GM18951 (cell line): ENCODE measurements at regions of chr3 and their contacts with region 1.

Region 1: DNA sequence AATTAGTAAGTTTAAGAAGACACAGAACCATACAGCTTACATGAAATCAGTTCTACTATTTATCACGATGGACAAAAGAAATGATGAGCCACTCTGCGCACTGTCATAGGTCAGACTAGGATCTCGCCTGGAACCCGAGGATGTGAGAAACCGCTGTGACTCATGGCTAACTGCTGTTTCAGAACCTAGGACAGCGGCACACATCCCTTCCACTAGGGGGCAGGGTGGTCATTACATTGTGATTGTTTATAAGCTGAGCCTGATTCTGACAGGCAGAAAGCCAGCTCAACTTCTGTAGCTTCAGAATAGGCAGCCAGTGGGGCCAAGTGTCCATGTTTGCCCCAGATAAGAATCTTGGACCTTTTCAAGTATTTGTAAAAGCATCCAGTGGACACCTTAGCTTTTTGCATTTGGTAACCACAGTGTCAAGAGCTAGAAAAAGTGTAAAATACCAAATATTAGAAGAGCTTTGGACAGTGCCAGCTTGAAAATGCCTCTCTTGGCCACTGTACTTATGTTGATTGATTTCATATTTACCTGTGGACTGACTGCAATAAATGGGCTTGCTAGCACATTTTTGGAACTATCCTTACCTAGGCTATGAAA is 115.8 kb downstream of the KBTBD8 start:
- POLR2A ChIP-seq: no peak

Region 2: GRCh38 chr3:67176396-67176795 is 62.5 kb after region 1 on chr3:
- in situ Hi-C with region 1: no loop called
- POLR2A ChIP-seq: no peak

Region 3: DNA sequence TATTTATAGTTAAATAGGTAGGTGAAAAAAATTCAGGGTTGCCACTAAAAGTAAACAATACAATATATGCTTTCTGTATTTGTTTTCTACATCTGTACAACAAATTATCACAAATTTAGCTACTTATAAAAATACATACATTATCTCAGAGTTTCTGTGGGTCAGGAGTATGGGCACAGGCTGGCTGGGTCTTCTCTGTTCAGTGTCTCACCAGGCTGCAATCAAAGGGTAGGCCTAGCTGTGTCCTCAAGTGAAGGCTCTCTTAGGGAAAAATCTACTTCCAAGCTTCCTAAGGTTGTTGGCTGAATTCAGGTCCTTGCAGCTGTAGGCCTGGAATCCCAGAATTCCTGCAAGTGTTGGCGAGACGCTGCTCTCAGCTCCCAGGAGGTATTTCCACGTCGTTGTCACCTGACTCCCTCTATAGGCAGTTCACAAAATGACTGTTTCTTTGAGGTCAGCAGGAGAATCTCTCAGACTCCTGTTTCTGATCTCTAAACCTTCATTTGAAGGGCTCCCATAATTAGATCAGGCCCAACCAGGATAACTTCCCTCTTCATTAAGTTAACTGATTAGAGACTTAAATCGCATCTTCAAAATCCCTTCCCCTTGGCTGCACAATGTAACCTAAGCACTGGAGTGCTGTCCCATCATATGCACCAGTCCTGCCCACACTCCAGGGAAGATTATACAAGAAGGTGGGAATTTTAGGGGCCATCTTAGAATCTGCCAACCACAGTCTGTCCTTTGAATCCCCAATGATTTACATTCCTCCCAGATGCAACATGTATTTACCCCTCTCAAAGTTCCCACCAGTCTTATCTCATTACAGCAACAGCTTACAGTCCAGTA is 243.9 kb after region 1 on chr3:
- in situ Hi-C with region 1: loop called (anchors 25 kb)
- POLR2A ChIP-seq: no peak

Region 4: GRCh38 chr3:68876112-68876713 is 1762.3 kb after region 1 on chr3:
- in situ Hi-C with region 1: loop called (anchors 25 kb)
- POLR2A ChIP-seq: no peak